Ovary (tissue), 10 donors: ENCODE measurements at regions of chr6 and their contacts with region 1.

Region 1: GRCh38 chr6:128225610-128226009 is 294.8 kb downstream of the PTPRK start:
- DNase-seq: no peak
- H3K4me3 ChIP-seq: no peak overlapping the region
- H3K27ac ChIP-seq: no peak overlapping the region
- H3K4me1 ChIP-seq: no peaks in the 10 kb centered on the region
- H3K27me3 ChIP-seq: no peaks in the 10 kb centered on the region
- CTCF ChIP-seq: no peak
- EP300 ChIP-seq: no peak
- POLR2A ChIP-seq: no peak

Region 2: DNA sequence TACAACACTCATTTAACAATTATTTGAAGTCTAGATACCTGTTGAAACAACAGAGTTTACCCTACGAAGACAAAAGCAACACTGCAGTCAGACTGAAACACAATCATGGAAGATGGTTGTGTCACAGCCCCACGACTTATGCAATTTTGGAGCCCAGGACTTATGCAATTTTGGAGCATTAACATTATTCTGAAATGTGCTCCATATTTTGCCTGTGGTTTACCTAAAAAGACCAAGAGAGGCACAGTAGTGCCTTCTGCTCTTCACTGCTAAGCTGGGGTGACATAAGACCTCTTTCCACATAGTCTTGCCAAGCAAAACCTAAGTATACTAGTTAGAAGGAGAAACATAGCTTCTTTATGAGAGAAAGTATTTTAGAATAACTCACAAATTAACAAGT is 78.3 kb after region 1 on chr6:
- intact Hi-C with region 1: loop called in 1 of 4 experiments (anchors 5 kb)
- DNase-seq: no peak
- H3K4me3 ChIP-seq: no peak overlapping the region
- H3K27ac ChIP-seq: no peak overlapping the region
- H3K4me1 ChIP-seq: no peaks in the 10 kb centered on the region
- H3K27me3 ChIP-seq: no peaks in the 10 kb centered on the region
- CTCF ChIP-seq: no peak
- EP300 ChIP-seq: no peak
- POLR2A ChIP-seq: no peak